ENCODE measurements at regions of chr14 and their contacts with region 1.

Region 1: GRCh38 chr14:54332490-54332889 is 64.3 kb upstream of the CDKN3 start:
- DNase-seq: no peak
- ATAC-seq: no peak
- H3K4me3 ChIP-seq: no peak overlapping the region
- H3K27ac ChIP-seq: no peak overlapping the region
- H3K4me1 ChIP-seq: no peaks in the 10 kb centered on the region; the same call in 1 of the 2 replicates
- H3K27me3 ChIP-seq: no peaks in the 10 kb centered on the region
- CTCF ChIP-seq: no peak

Region 2: DNA sequence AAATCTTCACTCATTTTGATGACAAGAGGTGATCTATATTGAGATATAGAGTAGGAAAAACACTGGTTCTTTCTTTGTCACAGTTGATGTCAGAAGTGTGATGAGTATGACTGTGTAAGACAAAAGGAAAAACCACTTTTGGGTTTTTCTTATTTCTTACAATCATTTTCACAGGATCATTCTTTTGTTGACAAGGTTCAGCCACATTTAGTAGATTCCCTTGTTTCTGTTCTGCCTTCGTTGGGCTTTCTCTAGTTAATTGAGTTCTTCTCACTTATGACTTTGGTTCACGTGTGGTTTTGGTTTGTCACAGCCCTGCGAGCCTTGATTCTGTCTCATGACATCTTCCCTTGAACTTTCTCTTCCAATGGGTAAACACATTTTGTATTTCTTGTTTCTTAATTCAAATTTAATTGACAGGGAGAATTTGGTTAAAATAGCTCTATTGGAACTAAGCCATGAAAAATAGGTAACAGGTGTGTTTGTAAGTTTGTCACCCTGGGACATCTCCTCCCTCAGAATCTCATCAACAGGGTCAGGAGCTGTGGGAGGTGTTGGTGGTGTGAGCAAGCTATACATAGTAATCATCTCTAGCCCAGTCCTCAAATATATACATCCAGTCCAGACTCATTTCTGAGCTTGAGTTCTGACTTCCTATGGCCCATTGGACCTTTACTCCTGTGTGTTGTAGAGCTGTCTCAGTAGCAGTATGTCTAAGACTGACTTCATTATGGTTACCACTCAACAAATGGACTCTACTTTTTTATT is 631.2 kb before region 1 on chr14:
- CTCF ChIA-PET with region 1: no interaction called
- POLR2A ChIA-PET with region 1: interaction called, 10 read pairs
- in situ Hi-C with region 1: no loop called
- intact Hi-C with region 1: no loop called
- DNase-seq: no peak
- ATAC-seq: no peak
- H3K4me3 ChIP-seq: no peak overlapping the region
- H3K27ac ChIP-seq: no peak overlapping the region
- H3K4me1 ChIP-seq: no peaks in the 10 kb centered on the region
- H3K27me3 ChIP-seq: no peaks in the 10 kb centered on the region
- CTCF ChIP-seq: no peak

Measured in Panc1 (cell line).